ENCODE measurements at regions of chr1 and their contacts with region 1.

Region 1: GRCh38 chr1:29202584-29203340 is 21.1 kb upstream of the SRSF4 start:
- DNase-seq: peak; percentile 90 to 99
- H3K4me3 ChIP-seq: no peak overlapping the region
- H3K27ac ChIP-seq: no peak overlapping the region
- H3K4me1 ChIP-seq: peaks cover 0 to 6% (median 2%) of the 10 kb centered on the region in 4 experiments; a peak in 2 of 7 replicates
- H3K27me3 ChIP-seq: no peaks in the 10 kb centered on the region
- CTCF ChIP-seq: peak; percentile 92 to 99 (median 94)
- EP300 ChIP-seq: no peak
- POLR2A ChIP-seq: no peak
- RAD21 ChIP-seq: peak; percentile 97 to 99

Region 2: DNA sequence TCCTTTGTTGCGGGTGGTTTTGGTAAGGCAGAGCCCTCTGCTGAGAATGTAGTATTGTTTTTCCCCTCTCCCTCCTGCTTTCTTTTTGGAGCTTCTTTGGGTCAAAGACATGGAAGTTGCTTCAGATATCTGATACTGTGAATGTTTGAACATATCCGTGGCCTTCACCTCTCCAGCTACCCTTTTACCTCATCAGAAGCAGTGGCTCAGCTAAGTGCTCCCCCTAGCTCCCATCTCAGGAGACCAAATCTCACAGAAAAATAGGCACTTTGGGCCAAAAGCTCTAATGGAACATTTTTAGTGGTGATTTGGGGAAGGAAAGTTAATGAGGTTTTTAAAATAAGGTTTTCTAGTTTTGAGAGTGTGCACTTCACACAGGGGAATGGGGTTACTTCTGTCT is 85.4 kb before region 1 on chr1:
- CTCF ChIA-PET with region 1: interaction called, 20 read pairs
- POLR2A ChIA-PET with region 1: interaction called, 4 read pairs
- DNase-seq: no peak
- H3K4me3 ChIP-seq: no peak overlapping the region
- H3K27ac ChIP-seq: no peak overlapping the region
- H3K4me1 ChIP-seq: peaks cover 2 to 5% (median 3%) of the 10 kb centered on the region in 4 experiments; a peak in 4 of 7 replicates
- H3K27me3 ChIP-seq: peaks cover 0 to 17% (median 11%) of the 10 kb centered on the region in 4 experiments; a peak in 6 of 7 replicates
- CTCF ChIP-seq: peak in 2 of 3 experiments; percentile 30 to 47; a peak in 2 of 4 replicates
- EP300 ChIP-seq: no peak
- POLR2A ChIP-seq: no peak
- RAD21 ChIP-seq: peak; percentile 35 to 54; a peak in 3 of 4 replicates

Region 3: GRCh38 chr1:29124366-29125236 is 78.2 kb before region 1 on chr1:
- CTCF ChIA-PET with region 1: interaction called, 20 read pairs
- POLR2A ChIA-PET with region 1: interaction called, 9 read pairs
- DNase-seq: peak; percentile 66 to 93
- H3K4me3 ChIP-seq: peak overlapping the region; percentile 51 to 91 (median 61)
- H3K27ac ChIP-seq: peak overlapping the region; percentile 48; the same call in 1 of the 2 replicates
- H3K4me1 ChIP-seq: peaks cover 0 to 19% (median 9%) of the 10 kb centered on the region in 4 experiments; a peak in 6 of 7 replicates
- H3K27me3 ChIP-seq: peaks cover 0 to 42% (median 25%) of the 10 kb centered on the region in 4 experiments; a peak in 6 of 7 replicates
- CTCF ChIP-seq: peak in 2 of 3 experiments; percentile 42 to 77; a peak in 3 of 4 replicates
- EP300 ChIP-seq: peak; percentile 36 to 82; a peak in 2 of 3 replicates
- POLR2A ChIP-seq: no peak; a peak in 1 of 3 replicates
- RAD21 ChIP-seq: peak in 1 of 2 experiments; percentile 23; a peak in 2 of 4 replicates

Region 4: GRCh38 chr1:29162476-29163138 is 40.2 kb before region 1 on chr1:
- CTCF ChIA-PET with region 1: interaction called, 13 read pairs
- POLR2A ChIA-PET with region 1: interaction called, 8 read pairs
- DNase-seq: peak in 1 of 2 experiments; percentile 41
- H3K4me3 ChIP-seq: no peak overlapping the region
- H3K27ac ChIP-seq: no peak overlapping the region
- H3K4me1 ChIP-seq: peaks cover 15 to 37% (median 20%) of the 10 kb centered on the region in 4 experiments
- H3K27me3 ChIP-seq: no peaks in the 10 kb centered on the region
- CTCF ChIP-seq: no peak
- EP300 ChIP-seq: no peak
- POLR2A ChIP-seq: no peak
- RAD21 ChIP-seq: no peak

Region 5: GRCh38 chr1:29181413-29182225 is 21.1 kb before region 1 on chr1 and contains the start of gene SRSF4:
- CTCF ChIA-PET with region 1: interaction called, 29 read pairs
- POLR2A ChIA-PET with region 1: interaction called, 37 read pairs
- DNase-seq: peak; percentile 99
- H3K4me3 ChIP-seq: peak within 1 kb of the TSS; percentile 79 to 95 (median 89)
- H3K27ac ChIP-seq: peak within 1 kb of the TSS; percentile 97
- H3K4me1 ChIP-seq: peaks cover 2 to 13% (median 6%) of the 10 kb centered on the region in 4 experiments; a peak in 5 of 7 replicates
- H3K27me3 ChIP-seq: no peaks in the 10 kb centered on the region
- CTCF ChIP-seq: peak; percentile 61 to 85 (median 79)
- EP300 ChIP-seq: peak in 1 of 2 experiments; percentile 65; a peak in 1 of 3 replicates
- POLR2A ChIP-seq: peak in 1 of 2 experiments; percentile 77; a peak in 2 of 3 replicates
- RAD21 ChIP-seq: peak; percentile 43 to 55
- total RNA-seq, gene SRSF4: 83.5 and 86.5 TPM in 2 replicates